ENCODE measurements at regions of chr7 and their contacts with region 1.

Region 1: DNA sequence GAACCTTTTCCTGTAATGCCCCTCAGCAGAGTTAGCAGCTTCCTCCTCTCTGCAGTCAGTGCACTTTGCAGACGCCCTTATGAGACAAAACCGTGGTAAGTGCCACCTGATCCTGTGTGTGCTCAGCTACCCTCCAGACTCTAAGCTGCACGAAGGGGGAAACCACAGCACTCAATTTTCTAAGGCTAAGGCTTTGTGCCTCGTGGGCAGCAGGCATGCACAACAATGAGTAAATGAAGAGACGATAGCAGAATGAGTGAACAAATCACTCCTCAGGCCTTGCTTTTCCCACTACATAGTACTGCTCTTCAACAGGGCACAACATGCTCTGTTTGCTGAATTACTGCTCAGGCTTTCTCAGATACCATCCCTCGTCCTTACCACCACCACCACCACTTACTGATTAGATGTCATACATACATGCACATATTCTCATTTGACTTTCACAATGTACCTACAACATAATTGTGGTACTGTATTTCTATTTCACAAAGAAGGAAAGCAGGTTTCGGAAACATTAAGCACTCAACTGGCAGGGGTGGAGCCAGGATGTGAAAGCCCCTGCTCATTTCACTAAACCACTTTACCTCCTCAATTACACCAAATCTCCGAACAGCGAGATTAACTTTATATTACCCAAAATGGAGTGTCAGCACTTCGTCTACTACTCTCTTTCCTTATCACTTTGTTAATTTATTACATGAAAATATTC is 85.4 kb downstream of the ICA1 start:
- DNase-seq: peak; percentile 31 to 90 (median 71)
- ATAC-seq: peak; percentile 91
- H3K4me3 ChIP-seq: peak overlapping the region; percentile 6 to 36
- H3K4me3 Mint-ChIP-seq: peak overlapping the region; percentile 74
- H3K27ac ChIP-seq: peak overlapping the region; percentile 63 to 84
- H3K27ac Mint-ChIP-seq: peak overlapping the region; percentile 98
- H3K4me1 ChIP-seq: peaks cover 50% of the 10 kb centered on the region
- H3K4me1 Mint-ChIP-seq: peaks cover 65% of the 10 kb centered on the region
- H3K27me3 ChIP-seq: no peaks in the 10 kb centered on the region
- H3K27me3 Mint-ChIP-seq: no peaks in the 10 kb centered on the region
- CTCF ChIP-seq: no peak

Region 2: GRCh38 chr7:7640221-7641128 is 536.1 kb before region 1 on chr7 and contains the start of gene UMAD1:
- CTCF ChIA-PET with region 1: no interaction called
- POLR2A ChIA-PET with region 1: interaction called, 12 read pairs
- intact Hi-C with region 1: loop called in 1 of 2 experiments (anchors 1 kb)
- DNase-seq: peak; percentile 96 to 100 (median 98)
- ATAC-seq: peak; percentile 87
- H3K4me3 ChIP-seq: peak within 1 kb of the TSS; percentile 84 to 94
- H3K4me3 Mint-ChIP-seq: peak within 1 kb of the TSS; percentile 97
- H3K27ac ChIP-seq: peak within 1 kb of the TSS; percentile 96 to 97
- H3K27ac Mint-ChIP-seq: peak within 1 kb of the TSS; percentile 96
- H3K4me1 ChIP-seq: peaks cover 22% of the 10 kb centered on the region
- H3K4me1 Mint-ChIP-seq: peaks cover 46% of the 10 kb centered on the region
- H3K27me3 ChIP-seq: no peaks in the 10 kb centered on the region
- H3K27me3 Mint-ChIP-seq: no peaks in the 10 kb centered on the region
- CTCF ChIP-seq: no peak
- total RNA-seq, gene UMAD1: 11.1 to 11.2 TPM

Region 3: GRCh38 chr7:8134089-8134733 is 42.3 kb before region 1 on chr7:
- CTCF ChIA-PET with region 1: interaction called, 5 read pairs
- POLR2A ChIA-PET with region 1: interaction called, 3 read pairs
- intact Hi-C with region 1: loop called in 1 of 2 experiments (anchors 2 kb)
- DNase-seq: peak in 2 of 9 experiments; percentile 55 to 64
- ATAC-seq: peak; percentile 21
- H3K4me3 ChIP-seq: no peak overlapping the region
- H3K4me3 Mint-ChIP-seq: peak overlapping the region; percentile 37
- H3K27ac ChIP-seq: peak overlapping the region in 1 of 2 experiments; percentile 57
- H3K27ac Mint-ChIP-seq: peak overlapping the region; percentile 99
- H3K4me1 ChIP-seq: peaks cover 48% of the 10 kb centered on the region
- H3K4me1 Mint-ChIP-seq: peaks cover 60% of the 10 kb centered on the region
- H3K27me3 ChIP-seq: no peaks in the 10 kb centered on the region
- H3K27me3 Mint-ChIP-seq: no peaks in the 10 kb centered on the region
- CTCF ChIP-seq: no peak

Region 4: DNA sequence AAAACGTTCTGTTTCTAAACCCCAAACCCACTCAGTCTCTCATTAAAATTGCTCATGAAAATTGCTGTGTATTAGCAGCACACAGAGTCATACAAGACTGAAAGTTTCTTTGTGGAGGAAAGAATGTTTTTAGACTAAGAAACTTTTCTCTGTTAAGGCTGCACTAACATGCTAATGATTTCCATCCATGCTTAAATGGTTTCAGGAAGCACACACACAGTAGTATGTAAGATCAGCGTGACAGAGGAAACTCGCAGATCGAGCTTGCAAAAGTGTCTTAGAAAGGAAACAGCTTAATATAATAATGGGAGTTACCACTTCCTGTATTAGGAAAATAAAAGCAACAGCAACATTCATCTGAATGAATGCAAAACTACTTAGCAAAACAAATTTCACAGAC is 27.3 kb before region 1 on chr7:
- CTCF ChIA-PET with region 1: no interaction called
- POLR2A ChIA-PET with region 1: no interaction called
- intact Hi-C with region 1: loop called in 1 of 2 experiments (anchors 2 kb)
- DNase-seq: peak in 1 of 9 experiments; percentile 32
- ATAC-seq: no peak
- H3K4me3 ChIP-seq: no peak overlapping the region
- H3K4me3 Mint-ChIP-seq: no peak overlapping the region
- H3K27ac ChIP-seq: no peak overlapping the region
- H3K27ac Mint-ChIP-seq: peak overlapping the region; percentile 66
- H3K4me1 ChIP-seq: peaks cover 27% of the 10 kb centered on the region
- H3K4me1 Mint-ChIP-seq: peaks cover 48% of the 10 kb centered on the region
- H3K27me3 ChIP-seq: no peaks in the 10 kb centered on the region
- H3K27me3 Mint-ChIP-seq: no peaks in the 10 kb centered on the region
- CTCF ChIP-seq: no peak

Region 5: DNA sequence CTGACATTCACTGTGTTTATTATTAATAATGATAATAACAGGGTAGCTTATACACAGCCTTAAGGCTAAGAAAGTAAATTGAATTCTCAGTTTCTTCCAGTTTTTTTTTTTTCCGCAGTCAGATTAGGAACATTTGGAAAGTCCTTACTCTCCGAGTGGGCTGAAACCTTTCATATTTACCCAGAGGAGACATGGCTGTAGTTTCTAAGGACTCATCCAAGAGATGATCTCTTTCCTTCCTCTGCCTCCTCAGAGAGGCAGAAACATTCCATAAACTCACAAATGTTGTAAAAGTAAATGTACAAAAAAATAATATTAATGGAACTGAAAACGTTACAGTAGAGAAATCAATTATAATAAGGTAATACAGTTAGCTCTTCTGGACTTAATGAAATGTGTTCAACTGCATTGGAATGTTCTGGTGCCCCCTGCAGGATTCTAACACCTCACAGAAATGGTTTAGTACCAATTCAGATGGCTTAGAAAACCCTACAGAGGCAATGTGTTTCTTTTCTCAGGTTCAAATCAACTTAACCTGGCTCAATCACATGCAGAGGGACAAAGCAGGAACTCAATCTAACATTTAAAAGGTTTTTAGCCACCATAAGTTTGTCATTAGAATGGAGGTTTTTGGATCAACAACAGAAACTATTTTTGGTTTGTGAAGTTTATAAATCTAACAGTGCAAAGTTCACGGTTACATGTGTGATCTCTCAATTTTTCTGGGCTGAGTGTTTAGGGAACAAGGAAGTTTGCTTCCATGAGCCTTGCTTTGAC is 13.8 kb after region 1 on chr7:
- CTCF ChIA-PET with region 1: interaction called, 13 read pairs
- POLR2A ChIA-PET with region 1: interaction called, 13 read pairs
- intact Hi-C with region 1: loop called in 1 of 2 experiments (anchors 1 kb)
- DNase-seq: peak; percentile 32 to 84 (median 70)
- ATAC-seq: peak; percentile 86
- H3K4me3 ChIP-seq: no peak overlapping the region
- H3K4me3 Mint-ChIP-seq: no peak overlapping the region
- H3K27ac ChIP-seq: no peak overlapping the region
- H3K27ac Mint-ChIP-seq: no peak overlapping the region
- H3K4me1 ChIP-seq: no peaks in the 10 kb centered on the region
- H3K4me1 Mint-ChIP-seq: peaks cover 16% of the 10 kb centered on the region
- H3K27me3 ChIP-seq: no peaks in the 10 kb centered on the region
- H3K27me3 Mint-ChIP-seq: peaks cover 5% of the 10 kb centered on the region
- CTCF ChIP-seq: peak; percentile 89

Measured in CD8-positive, alpha-beta T cell (primary cell).